Activated T-helper 2 cell treated with anti-CD3 and anti-CD28 coated beads, Interferon-gamma antibody, Interleukin-2, Interleukin-4, amounts not matched to agents 10 μg/mL and 5 μg/mL and 100 μg/mL, durations not matched to agents 14 hours and 24 hours and 36 hours (primary cell): ENCODE measurements at regions of chr1 and their contacts with region 1.

Region 1: DNA sequence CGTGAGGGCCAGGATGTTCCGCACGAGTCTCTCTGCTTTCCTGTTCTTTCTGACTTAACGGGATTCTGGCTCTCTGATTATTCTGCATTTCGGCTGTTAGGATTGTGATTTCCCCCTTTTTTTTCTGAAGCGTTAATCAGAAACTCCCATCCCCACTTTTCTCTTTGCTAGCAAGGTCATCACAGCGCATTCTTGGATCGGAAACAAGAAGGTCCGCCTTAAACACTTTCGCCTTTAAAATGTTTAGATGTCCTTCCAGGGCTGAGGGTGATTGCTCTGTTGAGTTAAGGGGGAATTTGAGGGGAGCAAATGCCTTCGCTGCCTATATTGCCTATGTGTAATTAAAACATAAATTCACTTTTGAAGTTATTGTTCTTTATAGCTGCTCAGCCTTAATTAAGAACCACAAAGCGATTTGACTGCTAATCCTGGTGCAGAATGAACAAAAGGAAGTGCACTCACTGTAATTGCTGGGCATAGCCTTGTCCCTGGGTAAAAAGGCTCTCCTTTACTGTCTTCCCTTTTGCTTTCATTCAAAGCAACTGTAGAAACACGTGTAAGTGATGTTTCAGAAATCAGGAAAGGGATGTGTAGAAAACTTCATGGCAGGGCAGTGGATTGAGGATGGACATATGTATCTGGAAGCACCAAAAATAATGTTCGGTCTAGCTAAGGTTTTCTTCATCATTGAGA is 1.2 kb downstream of the LAMC1 start:
- DNase-seq: no peak
- H3K4me3 Mint-ChIP-seq: peak overlapping the region; percentile 79
- H3K27ac Mint-ChIP-seq: no peak overlapping the region
- H3K4me1 Mint-ChIP-seq: peaks cover 11% of the 10 kb centered on the region
- H3K27me3 Mint-ChIP-seq: peaks cover 80% of the 10 kb centered on the region

Region 2: DNA sequence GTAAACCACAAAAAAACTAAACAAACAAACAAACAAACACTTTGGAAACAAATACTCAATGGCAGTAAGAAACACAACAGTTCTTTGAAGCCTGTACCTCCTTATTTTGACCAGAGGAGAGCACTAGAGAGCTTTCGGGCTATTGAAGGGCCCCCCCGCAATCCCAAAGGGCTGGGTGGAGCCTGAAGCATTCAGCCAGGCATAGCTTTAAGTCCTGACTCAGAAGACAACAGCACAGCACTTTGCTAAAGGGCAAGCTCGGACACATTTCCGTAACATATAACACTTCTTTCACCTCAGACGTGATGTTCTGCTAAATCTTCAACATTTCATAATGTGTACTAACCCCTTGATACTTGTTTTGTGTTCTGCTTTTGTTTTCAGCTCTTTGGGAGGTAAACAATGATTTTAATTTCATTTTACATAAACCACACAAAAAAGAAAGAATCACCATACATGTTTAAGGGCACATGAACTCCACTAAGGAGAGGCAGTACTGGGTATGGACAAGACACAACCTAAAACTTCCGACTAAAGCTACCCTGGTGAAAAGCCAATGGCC is 61.8 kb before region 1 on chr1:
- intact Hi-C with region 1: loop called (anchors 5 kb)
- DNase-seq: no peak
- H3K4me3 Mint-ChIP-seq: no peak overlapping the region
- H3K27ac Mint-ChIP-seq: no peak overlapping the region
- H3K4me1 Mint-ChIP-seq: peaks cover 5% of the 10 kb centered on the region
- H3K27me3 Mint-ChIP-seq: peaks cover 12% of the 10 kb centered on the region